Natural killer cell (primary cell): ENCODE measurements at regions of chr16 and their contacts with region 1.

Region 1: GRCh38 chr16:87860553-87861299 is 8.6 kb downstream of the SLC7A5 start:
- DNase-seq: no peak
- ATAC-seq: no peak
- H3K4me3 ChIP-seq: no peak overlapping the region
- H3K4me3 Mint-ChIP-seq: peak overlapping the region; percentile 17
- H3K27ac ChIP-seq: no peak overlapping the region
- H3K27ac Mint-ChIP-seq: peak overlapping the region; percentile 29 to 63
- H3K4me1 ChIP-seq: peaks cover 40% of the 10 kb centered on the region
- H3K4me1 Mint-ChIP-seq: peaks cover 7 to 13% of the 10 kb centered on the region in 2 donors
- H3K27me3 ChIP-seq: no peaks in the 10 kb centered on the region
- H3K27me3 Mint-ChIP-seq: no peaks in the 10 kb centered on the region
- CTCF ChIP-seq: no peak

Region 2: DNA sequence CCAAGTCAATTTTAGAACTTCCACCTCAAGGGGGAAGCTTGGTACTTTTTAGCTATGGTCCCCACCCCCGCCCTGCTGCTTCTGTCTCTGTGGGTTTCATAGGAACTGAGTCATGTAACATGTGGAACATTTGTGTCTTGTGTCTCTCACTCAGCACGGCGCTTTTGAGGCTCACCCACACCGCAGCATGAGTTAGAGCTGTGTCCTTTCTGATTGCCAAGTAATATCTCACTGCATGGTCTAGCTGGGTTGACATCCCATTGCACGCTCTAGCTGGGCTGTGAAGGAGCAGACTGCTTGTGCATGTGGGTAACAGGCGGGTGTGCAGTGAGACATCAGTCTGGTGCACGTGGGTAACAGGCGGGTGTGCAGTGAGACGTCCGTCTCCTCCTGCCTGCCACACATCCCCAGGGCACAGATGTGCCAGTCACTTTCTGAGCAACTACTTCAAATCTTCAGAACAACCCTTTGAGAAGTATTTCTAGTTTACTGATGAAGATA is 35.0 kb after region 1 on chr16:
- intact Hi-C with region 1: loop called (anchors 5 kb)
- DNase-seq: peak; percentile 54 to 77
- ATAC-seq: peak; percentile 82 to 89 (median 89)
- H3K4me3 ChIP-seq: no peak overlapping the region
- H3K4me3 Mint-ChIP-seq: peak overlapping the region; percentile 54
- H3K27ac ChIP-seq: peak overlapping the region; percentile 38
- H3K27ac Mint-ChIP-seq: peak overlapping the region; percentile 85 to 86
- H3K4me1 ChIP-seq: peaks cover 43% of the 10 kb centered on the region
- H3K4me1 Mint-ChIP-seq: peaks cover 29 to 31% of the 10 kb centered on the region in 2 donors
- H3K27me3 ChIP-seq: no peaks in the 10 kb centered on the region
- H3K27me3 Mint-ChIP-seq: no peaks in the 10 kb centered on the region
- CTCF ChIP-seq: no peak

Region 3: GRCh38 chr16:87914812-87915211 is 54.1 kb after region 1 on chr16:
- intact Hi-C with region 1: no loop called
- DNase-seq: no peak
- ATAC-seq: no peak
- H3K4me3 ChIP-seq: no peak overlapping the region
- H3K4me3 Mint-ChIP-seq: no peak overlapping the region
- H3K27ac ChIP-seq: no peak overlapping the region
- H3K27ac Mint-ChIP-seq: no peak overlapping the region
- H3K4me1 ChIP-seq: peaks cover 2% of the 10 kb centered on the region
- H3K4me1 Mint-ChIP-seq: peaks cover 0 to 5% of the 10 kb centered on the region in 2 donors
- H3K27me3 ChIP-seq: no peaks in the 10 kb centered on the region
- H3K27me3 Mint-ChIP-seq: peaks cover 8 to 13% of the 10 kb centered on the region in 2 donors
- CTCF ChIP-seq: no peak